IMR-90 (cell line): ENCODE measurements at regions of chr19 and their contacts with region 1.

Region 1: DNA sequence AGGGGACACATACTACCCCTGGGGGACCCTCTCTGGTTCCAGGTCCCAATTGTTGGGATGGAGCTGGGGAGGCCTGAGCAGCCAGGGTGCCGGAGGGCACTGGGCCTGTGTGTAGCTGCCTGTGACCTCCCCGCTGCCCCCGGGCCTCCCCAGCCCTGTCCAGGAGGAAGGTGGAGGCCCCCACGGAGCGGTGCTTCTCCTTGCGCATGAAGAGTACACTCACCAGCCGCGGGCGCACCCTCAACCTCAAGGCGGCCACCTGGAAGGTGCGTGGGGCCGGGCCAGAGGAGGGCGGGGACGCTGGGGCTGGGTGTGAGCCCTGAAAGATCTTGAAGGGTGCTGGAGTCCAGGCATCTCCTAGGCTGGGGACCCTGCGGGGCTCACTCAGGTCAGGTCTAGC is 11.7 kb downstream of the HIF3A start:
- DNase-seq: no peak
- ATAC-seq: no peak
- H3K4me3 ChIP-seq: no peak overlapping the region
- H3K27ac ChIP-seq: no peak overlapping the region
- H3K4me1 ChIP-seq: no peaks in the 10 kb centered on the region
- H3K27me3 ChIP-seq: peaks cover 2% of the 10 kb centered on the region; the same call in 1 of the 2 replicates
- CTCF ChIP-seq: no peak
- POLR2A ChIP-seq: no peak
- RAD21 ChIP-seq: no peak

Region 2: GRCh38 chr19:46021531-46022041 is 286.9 kb before region 1 on chr19:
- CTCF ChIA-PET with region 1: no interaction called
- POLR2A ChIA-PET with region 1: no interaction called
- dilution Hi-C with region 1: no loop called
- in situ Hi-C with region 1: no loop called
- intact Hi-C with region 1: no loop called
- DNase-seq: no peak
- ATAC-seq: no peak
- H3K4me3 ChIP-seq: no peak overlapping the region
- H3K27ac ChIP-seq: no peak overlapping the region
- H3K4me1 ChIP-seq: no peaks in the 10 kb centered on the region
- H3K27me3 ChIP-seq: peaks cover 2% of the 10 kb centered on the region; the same call in 1 of the 2 replicates
- CTCF ChIP-seq: no peak
- POLR2A ChIP-seq: no peak
- RAD21 ChIP-seq: no peak

Region 3: DNA sequence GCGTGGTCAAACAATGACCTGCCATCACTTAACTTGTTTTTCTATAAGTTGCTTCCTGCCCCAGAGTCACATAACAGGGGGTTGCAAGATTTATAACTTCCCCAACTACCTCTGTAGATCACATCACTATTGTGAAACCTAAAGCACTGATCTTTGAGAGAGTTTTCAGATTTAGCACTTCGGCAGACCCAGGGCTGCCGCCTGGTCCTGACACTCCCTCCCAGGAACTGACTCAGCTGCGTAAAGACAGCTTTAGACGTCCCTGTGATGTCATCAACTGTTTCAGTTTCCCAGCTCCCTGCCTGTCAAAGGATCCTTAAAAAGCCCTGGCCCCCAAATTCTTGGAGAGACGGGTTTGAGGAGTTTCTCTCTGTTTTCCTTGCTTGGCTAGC is 127.1 kb before region 1 on chr19:
- CTCF ChIA-PET with region 1: no interaction called
- POLR2A ChIA-PET with region 1: no interaction called
- dilution Hi-C with region 1: no loop called
- in situ Hi-C with region 1: no loop called
- intact Hi-C with region 1: no loop called
- DNase-seq: peak; percentile 28
- ATAC-seq: no peak
- H3K4me3 ChIP-seq: no peak overlapping the region
- H3K27ac ChIP-seq: no peak overlapping the region
- H3K4me1 ChIP-seq: no peaks in the 10 kb centered on the region
- H3K27me3 ChIP-seq: peaks cover 33% of the 10 kb centered on the region
- CTCF ChIP-seq: no peak
- POLR2A ChIP-seq: no peak
- RAD21 ChIP-seq: no peak

Region 4: GRCh38 chr19:46324277-46324676 is 15.8 kb after region 1 on chr19:
- CTCF ChIA-PET with region 1: interaction called, 11 read pairs
- POLR2A ChIA-PET with region 1: no interaction called
- dilution Hi-C with region 1: no loop called
- in situ Hi-C with region 1: no loop called
- intact Hi-C with region 1: no loop called
- DNase-seq: no peak
- ATAC-seq: no peak
- H3K4me3 ChIP-seq: no peak overlapping the region
- H3K27ac ChIP-seq: no peak overlapping the region
- H3K4me1 ChIP-seq: no peaks in the 10 kb centered on the region
- H3K27me3 ChIP-seq: no peaks in the 10 kb centered on the region; the same call in 1 of the 2 replicates
- CTCF ChIP-seq: no peak
- POLR2A ChIP-seq: no peak
- RAD21 ChIP-seq: no peak

Region 5: DNA sequence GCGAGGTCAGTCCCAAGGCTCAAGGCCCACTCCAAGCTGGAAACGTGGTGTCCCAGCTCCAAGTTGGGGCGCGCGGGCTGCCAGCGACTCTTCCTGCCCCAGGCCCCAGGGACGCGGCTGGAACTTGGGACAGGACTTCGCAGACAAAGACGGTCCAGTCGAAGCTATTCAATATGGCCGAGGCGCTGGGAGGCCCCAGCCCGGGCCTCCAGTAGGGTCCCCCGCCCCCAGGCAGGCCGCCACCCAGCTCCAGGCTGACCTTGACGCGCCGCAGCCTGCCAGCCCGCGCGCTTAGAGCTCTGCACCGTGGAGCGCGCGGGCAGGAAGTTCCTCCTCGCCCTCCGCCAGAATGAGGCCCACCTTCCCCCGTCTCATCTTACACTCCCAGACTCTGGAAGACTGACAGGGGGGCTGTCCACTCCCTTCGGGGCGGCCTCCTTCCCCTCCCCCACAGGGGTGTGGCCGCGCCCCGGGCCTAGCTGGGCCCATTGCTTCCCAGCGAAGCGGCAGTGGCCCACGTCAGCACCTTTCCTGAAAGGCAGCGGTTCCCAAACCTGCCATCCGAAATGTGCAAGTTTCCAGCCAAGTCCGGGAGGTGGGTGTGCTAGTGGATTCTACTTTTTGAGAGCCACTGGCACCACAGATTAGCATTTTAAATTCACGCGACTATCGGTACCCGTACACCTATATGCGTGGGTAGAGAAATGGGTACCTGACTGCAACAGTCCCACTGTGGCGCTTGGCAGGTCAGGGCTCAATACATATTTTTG is 104.9 kb after region 1 on chr19 and contains the start of gene CCDC8:
- CTCF ChIA-PET with region 1: no interaction called
- POLR2A ChIA-PET with region 1: no interaction called
- dilution Hi-C with region 1: no loop called
- in situ Hi-C with region 1: no loop called
- intact Hi-C with region 1: no loop called
- DNase-seq: peak; percentile 92
- ATAC-seq: peak; percentile 83
- H3K4me3 ChIP-seq: peak within 1 kb of the TSS; percentile 57
- H3K27ac ChIP-seq: peak within 1 kb of the TSS; percentile 84
- H3K4me1 ChIP-seq: peaks cover 14% of the 10 kb centered on the region
- H3K27me3 ChIP-seq: no peaks in the 10 kb centered on the region
- CTCF ChIP-seq: no peak
- POLR2A ChIP-seq: peak; percentile 47; the same call in 1 of the 2 replicates
- RAD21 ChIP-seq: no peak
- total RNA-seq, gene CCDC8: 10.2 and 10.3 TPM in 2 replicates